Activated naive CD4-positive, alpha-beta T cell treated with anti-CD3 and anti-CD28 coated beads for 36 hours (primary cell): ENCODE measurements at regions of chr18 and their contacts with region 1.

Region 1: GRCh38 chr18:45839414-45840395 is 14.2 kb downstream of the SIGLEC15 start:
- DNase-seq: peak; percentile 49
- H3K4me3 Mint-ChIP-seq: no peak overlapping the region
- H3K27ac Mint-ChIP-seq: no peak overlapping the region
- H3K4me1 Mint-ChIP-seq: peaks cover 11% of the 10 kb centered on the region
- H3K27me3 Mint-ChIP-seq: peaks cover 28% of the 10 kb centered on the region

Region 2: GRCh38 chr18:45775241-45775676 is 64.4 kb before region 1 on chr18:
- CTCF ChIA-PET with region 1: no interaction called
- intact Hi-C with region 1: loop called (anchors 5 kb)
- DNase-seq: peak; percentile 83
- H3K4me3 Mint-ChIP-seq: peak overlapping the region; percentile 79
- H3K27ac Mint-ChIP-seq: no peak overlapping the region
- H3K4me1 Mint-ChIP-seq: peaks cover 10% of the 10 kb centered on the region
- H3K27me3 Mint-ChIP-seq: peaks cover 7% of the 10 kb centered on the region